Psoas muscle (tissue), 8 donors: ENCODE measurements at regions of chr19 and their contacts with region 1.

Region 1: DNA sequence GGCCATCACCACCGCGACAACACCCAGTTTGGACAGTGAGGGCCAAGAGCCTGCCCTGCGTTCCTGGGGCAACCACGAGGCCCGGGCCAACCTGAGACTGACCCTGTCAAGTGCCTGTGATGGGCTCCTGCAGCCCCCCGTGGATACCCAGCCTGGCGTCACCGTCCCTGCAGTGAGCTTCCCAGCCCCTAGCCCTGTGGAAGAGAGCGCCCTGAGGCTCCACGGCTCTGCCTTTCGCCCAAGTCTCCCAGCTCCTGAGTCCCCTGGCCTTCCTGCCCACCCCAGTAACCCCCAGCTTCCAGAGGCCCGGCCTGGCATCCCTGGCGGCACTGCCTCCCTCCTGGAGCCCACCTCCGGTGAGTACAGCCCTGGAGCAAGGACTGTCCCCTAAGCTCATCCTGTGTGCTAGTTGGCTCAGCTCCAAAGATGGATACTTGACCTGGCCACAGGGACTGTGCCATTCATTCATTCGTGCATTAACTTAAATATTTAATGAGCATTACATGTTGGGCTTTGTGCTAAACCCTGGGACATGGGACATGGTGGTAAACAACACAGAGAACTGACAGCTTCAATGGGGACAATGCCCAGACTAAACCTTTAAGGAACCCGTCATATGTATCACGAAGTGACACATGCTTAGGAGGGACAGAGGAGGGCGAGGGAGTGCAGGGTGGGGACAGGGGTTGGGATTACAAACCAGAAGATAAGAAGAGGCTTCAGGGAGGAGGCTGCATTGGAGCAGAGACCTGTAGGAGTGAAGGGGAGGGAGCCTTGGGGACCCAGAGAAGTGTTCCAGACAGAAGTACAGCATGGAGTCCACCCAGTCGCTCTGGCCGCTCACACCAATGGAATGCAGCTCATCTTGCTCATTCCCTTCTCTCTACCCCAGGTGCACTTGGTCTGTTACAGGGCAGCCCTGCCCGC is 7.1 kb upstream of the OVOL3 start:
- DNase-seq: no peak
- ATAC-seq: no peak
- H3K4me3 ChIP-seq: no peak overlapping the region
- H3K27ac ChIP-seq: no peak overlapping the region
- H3K4me1 ChIP-seq: peaks cover 17% of the 10 kb centered on the region
- H3K27me3 ChIP-seq: no peaks in the 10 kb centered on the region
- CTCF ChIP-seq: no peak

Region 2: GRCh38 chr19:36060430-36060829 is 43.5 kb before region 1 on chr19:
- intact Hi-C with region 1: loop called in 1 of 2 experiments (anchors 5 kb)
- DNase-seq: peak; percentile 31 to 70
- ATAC-seq: peak; percentile 61 to 95 (median 84)
- H3K4me3 ChIP-seq: no peak overlapping the region
- H3K27ac ChIP-seq: no peak overlapping the region
- H3K4me1 ChIP-seq: peaks cover 13% of the 10 kb centered on the region
- H3K27me3 ChIP-seq: no peaks in the 10 kb centered on the region
- CTCF ChIP-seq: peak; percentile 57

Region 3: DNA sequence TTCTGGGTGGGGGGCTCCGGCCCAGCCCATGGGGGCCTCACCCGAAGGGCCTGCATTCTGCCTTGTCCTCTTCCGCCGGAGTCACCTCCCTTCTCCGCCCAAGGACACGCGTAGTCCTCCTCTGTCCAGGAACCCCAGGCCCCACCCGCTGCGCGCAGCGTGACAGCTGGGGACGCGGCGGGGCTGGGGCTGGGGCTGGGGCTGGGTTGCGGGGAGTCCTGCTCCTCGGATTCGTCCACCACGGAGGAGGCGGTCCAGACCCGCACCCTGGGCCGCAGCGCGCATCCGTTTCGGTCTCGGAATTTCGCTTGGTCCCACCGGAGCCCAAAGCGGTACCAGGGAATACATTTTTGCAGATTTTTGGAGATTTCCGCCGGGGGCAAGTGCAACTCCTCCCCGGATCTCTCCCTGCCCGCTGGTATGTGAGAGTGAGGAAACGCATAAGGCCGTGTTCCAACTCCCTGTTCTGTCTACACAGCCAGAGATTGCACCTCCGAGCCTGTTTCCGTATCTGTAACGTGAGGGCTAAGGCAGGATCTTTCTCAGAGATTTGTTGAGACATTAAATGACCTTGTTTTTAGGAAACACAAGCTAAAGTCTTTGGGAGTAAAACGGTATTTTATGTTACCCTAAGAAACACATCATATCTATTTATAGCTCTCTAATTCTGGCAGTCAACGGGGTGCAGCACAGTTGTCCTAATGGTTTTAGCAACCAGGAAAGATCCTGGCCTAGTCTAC is 48.6 kb after region 1 on chr19 and contains the start of gene COX7A1:
- intact Hi-C with region 1: no loop called
- DNase-seq: peak; percentile 86 to 90
- ATAC-seq: peak; percentile 89 to 92 (median 90)
- H3K4me3 ChIP-seq: peak within 1 kb of the TSS; percentile 89
- H3K27ac ChIP-seq: peak within 1 kb of the TSS; percentile 99
- H3K4me1 ChIP-seq: peaks cover 24% of the 10 kb centered on the region
- H3K27me3 ChIP-seq: no peaks in the 10 kb centered on the region
- CTCF ChIP-seq: no peak
- total RNA-seq, gene COX7A1: 1,453 to 1,741 (median 1,623) TPM